Dorsolateral prefrontal cortex (tissue), 120 donors: ENCODE measurements at regions of chr9 and their contacts with region 1.

Region 1: GRCh38 chr9:133375724-133376654 is at the starts of genes STKLD1 and SURF4:
- DNase-seq: peak; percentile 90 to 98 (median 95)
- H3K4me3 ChIP-seq: peak within 1 kb of the TSS; percentile 69 to 100 (median 96)
- H3K27ac ChIP-seq: peak within 1 kb of the TSS; percentile 42 to 97 (median 90)
- H3K27me3 ChIP-seq: no peaks in the 10 kb centered on the region
- CTCF ChIP-seq: peak in 23 of 56 donors; percentile 1 to 40 (median 24)
- total RNA-seq, gene STKLD1: 1.6 to 9.9 (median 5.2) TPM
- total RNA-seq, gene SURF4: 55.4 to 99.4 (median 69.8) TPM

Region 2: DNA sequence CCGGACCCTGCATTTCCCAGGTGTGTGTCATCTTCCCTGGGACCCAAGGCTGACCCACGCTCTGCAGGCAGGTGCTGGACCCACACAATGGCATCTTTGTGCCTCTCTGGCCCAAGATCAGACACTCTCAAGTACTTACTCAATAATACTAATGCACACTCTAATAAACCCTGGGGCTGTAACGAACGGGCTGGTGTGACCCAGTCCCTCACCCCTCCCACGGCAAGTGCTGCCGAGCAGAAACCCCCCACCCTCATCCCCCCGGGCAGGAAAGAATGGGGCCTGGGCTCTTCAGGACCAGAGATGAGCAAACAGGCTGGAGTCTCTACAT is 165.8 kb before region 1 on chr9:
- intact Hi-C with region 1: no loop called
- DNase-seq: peak in 1 of 10 donors; percentile 2
- H3K4me3 ChIP-seq: no peak overlapping the region
- H3K27ac ChIP-seq: no peak overlapping the region
- H3K27me3 ChIP-seq: peaks cover 0 to 13% (median 0%) of the 10 kb centered on the region in 45 donors
- CTCF ChIP-seq: no peak

Region 3: DNA sequence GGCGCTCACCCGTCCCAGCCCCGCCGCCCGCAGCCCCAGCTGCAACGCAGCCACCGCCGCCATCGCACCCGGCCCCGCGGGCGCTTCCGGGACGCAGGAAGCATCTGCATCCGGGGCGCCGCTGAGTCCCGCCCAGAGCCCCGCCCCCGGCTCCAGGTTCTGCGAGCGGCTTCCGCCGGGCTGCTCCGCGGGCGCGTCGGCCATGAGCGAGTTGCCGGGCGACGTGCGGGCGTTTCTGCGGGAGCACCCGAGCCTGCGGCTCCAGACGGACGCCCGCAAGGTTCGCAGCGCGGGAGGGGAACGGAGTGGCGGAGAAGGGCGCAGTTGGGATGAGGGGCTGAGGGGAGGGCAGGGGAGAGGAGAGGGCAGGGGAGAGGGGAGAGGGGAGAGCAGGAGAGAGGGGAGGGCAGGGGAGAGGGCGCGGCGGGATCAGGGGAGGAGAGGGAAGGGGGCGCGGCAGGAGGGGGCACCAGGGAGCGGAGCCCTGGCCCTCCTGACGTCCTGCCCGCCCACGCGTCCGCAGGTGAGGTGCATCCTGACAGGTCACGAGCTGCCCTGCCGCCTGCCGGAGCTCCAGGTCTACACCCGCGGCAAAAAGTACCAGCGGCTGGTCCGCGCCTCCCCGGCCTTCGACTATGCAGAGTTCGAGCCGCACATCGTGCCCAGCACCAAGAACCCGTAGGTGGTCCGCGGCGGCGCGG is 19.4 kb before region 1 on chr9 and contains the starts of genes SURF1 and SURF2:
- intact Hi-C with region 1: loop called in 1 of 2 experiments (anchors 2 kb)
- DNase-seq: peak; percentile 77 to 92 (median 86)
- H3K4me3 ChIP-seq: peak within 1 kb of the TSS; percentile 62 to 95 (median 85)
- H3K27ac ChIP-seq: peak within 1 kb of the TSS in 48 of 59 donors; percentile 15 to 87 (median 66)
- H3K27me3 ChIP-seq: no peaks in the 10 kb centered on the region
- CTCF ChIP-seq: peak in 8 of 56 donors; percentile 0 to 30 (median 11)
- total RNA-seq, gene SURF1: 23.9 to 64.2 (median 39.4) TPM
- total RNA-seq, gene SURF2: 16.6 to 42.3 (median 26.4) TPM